Posterior vena cava (tissue), 2 donors: ENCODE measurements at regions of chr7 and their contacts with region 1.

Region 1: DNA sequence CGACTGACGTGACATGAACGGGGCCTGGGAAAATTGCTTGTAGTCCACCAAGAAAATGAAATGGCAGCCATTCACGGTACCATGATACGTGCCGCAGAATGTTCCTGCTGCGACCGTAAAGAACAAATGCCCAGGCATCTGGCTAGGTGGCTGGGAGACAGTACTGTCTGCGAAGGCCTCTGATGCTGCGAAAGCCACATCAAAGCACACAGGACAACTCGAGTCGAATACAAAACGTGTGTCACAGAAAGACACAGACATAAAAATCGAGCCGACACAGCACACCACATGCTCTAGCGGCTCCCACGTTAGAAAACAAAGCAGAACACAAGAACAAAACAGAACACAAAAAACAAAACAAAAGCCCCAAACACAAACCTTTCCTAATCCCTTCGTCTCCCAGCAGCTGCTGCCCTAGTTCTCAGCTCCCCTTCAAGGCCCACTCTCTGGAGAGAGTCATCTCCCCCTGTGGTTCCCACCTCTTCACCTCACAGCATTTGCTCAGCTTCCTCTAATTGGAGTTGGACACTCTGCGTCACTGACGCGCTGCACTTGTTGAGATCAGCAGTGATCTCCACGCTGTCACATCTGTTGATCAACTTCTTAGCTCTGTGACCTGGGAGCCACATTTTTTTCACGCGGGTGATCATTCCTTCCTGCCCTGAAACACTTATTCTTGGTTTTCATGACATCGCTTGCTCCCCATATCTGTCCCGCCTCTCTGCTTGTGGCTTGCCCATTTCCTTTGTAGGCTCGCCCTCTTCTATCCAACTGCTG is 112.2 kb downstream of the CLEC2L start:
- DNase-seq: no peak

Region 2: DNA sequence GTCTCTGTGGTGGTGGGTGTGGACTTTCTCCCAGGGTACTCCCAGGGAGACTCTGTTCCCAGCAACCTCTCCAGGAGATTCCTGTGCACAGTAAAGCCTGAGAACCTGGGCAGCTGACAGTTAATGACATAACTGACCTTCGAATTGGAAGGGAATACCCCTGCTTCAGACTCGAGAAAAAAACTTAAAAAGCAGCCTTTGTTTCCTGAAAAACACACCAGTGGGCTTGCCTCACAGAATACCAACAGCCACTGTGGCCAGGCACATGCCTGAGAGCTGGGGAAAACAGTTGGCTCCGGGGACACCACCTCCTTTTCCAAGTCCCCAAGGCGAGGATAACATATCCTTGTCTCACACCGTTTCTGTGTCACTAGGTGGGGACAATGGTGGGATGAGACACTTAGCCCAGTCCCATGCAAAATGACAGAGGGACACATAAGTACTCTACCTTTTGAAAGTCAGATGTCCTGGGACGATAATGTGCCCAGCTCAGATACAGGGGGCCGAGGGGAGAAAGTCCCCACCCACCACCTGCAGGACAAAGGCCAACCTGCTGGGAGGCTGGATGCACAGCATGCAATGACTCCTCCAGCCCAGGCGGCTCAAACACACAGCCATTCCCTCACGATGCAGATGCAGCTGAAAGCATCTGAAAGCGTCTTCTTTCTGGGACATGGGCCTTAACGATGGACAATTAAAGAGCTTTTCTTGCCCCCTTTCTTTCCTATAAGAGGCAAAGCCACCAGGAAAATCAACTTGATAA is 76.5 kb after region 1 on chr7:
- intact Hi-C with region 1: loop called in 1 of 2 experiments (anchors 2 kb)
- DNase-seq: no peak

Region 3: DNA sequence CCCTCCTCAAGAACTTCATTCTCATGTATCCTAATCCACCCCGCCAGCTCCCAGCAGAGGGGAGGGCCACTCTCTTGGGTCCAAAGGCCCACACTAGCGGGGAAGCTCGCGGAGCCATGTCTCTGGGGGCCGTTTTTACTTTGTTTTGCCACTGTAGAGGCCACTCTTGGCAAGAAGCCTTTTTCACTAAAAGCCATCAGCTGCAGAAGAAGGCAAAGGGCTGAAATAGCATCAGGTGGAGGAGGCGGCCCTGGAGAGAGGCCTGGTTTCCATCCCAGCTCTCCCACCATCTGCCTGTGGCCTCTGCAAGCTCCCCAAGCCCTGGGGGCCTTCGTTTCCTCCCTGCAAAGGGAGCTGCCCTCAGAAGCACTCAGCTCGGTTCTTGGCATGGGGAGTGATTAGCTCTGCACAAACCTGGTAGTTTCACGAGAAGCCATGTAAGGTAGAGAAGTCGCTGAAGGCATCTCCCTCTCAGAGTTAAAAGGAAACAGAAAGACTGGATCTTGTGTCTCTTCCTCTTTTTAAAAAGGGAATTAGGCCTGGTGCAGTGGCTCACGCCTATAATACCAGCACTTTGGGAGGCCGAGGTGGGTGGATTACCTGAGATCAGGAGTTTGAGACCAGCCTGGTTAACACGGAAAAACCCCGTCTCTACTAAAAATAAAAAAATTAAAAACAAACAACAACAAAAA is 356.8 kb after region 1 on chr7:
- intact Hi-C with region 1: loop called in 1 of 2 experiments (anchors 5 kb)
- DNase-seq: peak; percentile 43